Cardiac septum (tissue), 1 donor: ENCODE measurements at regions of chr1 and their contacts with region 1.

Region 1: DNA sequence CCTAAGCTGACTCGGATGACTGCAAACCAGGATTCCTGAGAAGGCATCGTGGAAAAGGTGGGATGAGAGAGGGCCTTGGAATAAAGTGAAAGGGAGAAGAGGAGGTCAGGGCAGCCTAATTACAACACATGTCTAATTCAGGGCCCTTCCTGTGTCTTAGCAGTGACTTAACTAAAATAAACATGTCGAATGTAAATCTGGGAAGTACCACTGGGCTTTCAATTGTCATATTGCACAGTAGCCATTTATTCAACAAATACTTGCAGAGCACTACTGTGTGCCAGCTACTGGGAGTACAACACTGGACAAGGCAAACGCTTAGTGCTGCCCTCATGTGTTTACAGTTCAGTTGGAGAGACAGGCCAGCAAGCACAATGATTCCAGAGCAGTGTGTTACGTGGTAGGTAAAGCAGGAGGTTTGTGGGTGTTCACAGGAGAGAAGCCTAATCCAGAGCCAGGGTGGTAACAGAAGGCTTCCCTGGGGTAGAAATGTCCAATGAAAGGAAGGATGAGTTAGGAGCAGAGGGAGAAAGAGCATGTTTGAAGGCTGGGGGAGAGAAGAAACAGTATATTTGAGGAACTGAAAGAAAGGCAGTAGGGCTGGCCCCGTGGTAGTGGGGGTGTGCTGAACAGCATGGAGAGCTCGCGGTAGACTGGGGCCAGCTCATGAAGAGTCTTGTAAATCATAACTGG is 38.0 kb upstream of the RASAL2 start:
- DNase-seq: no peak

Region 2: GRCh38 chr1:178037503-178038253 is 18.2 kb before region 1 on chr1:
- intact Hi-C with region 1: loop called (anchors 2 kb)
- DNase-seq: peak; percentile 94

Region 3: DNA sequence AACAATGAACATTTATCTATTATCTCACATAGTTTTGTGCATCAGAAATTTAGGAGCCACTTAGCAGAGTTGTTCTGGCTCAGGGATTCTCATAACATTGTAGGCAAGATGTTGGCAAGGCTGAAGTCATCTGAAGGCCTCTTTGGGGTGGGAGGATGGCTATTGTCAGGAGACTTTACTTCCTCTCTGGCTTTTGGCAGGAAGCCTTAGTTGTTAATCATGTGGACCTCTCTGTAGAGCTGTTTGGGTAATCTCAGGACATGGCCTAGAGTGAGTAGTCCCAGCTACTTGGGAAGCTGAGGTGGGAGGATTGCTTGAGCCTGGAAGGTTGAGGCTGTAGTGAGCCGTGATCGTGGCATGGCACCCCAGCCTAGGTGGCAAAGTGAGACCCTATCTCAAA is 78.1 kb after region 1 on chr1:
- intact Hi-C with region 1: loop called (anchors 10 kb)
- DNase-seq: no peak

Region 4: DNA sequence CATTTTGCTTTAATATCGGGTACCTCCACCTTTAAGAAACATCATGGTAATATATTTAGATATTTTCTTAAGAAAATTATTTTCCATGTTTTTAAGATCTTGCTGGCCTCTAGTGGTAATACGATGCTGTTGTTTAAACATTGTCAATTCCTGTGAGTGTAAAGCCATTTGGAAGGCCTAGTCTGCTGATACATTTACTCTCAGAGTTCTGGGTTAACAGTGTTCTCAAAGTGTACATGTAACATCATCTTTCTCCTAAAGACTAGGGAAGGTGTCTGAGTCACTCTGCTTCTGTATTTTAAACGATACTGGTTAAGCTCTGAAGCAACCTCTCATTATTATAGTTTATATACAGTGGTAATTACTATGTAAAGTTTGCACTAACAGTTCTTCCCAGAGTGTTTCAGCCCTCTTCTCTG is 227.0 kb after region 1 on chr1:
- intact Hi-C with region 1: loop called (anchors 5 kb)
- DNase-seq: no peak

Region 5: DNA sequence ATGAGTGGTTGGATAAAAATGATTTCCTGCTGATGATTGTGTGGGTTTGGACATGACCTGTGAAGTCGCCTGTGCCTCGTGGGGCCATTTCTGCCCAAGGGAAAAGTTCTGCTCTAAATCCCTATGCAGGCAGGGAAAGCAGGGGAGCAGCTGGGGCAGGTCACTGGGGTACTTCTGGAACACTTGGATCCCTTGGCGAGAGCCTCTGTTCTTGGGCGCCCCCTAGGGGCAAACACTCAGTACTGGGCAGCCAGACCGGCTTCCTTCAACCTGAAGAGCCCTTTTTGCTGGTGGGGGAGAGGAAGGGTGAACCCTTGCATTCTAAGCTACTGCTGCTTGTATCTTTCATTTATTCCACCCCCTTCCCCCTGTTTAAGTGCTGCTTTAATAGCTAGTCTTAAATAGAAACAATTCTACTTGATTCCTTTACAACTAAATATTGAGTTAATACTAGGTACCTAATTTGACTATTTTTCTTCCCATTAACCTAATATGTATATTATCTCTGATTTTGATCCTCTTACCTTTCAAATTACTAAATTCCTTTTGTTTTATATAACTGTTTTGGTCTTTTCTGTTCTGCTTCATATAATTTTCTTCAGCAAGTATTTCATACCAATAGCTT is 445.9 kb after region 1 on chr1:
- intact Hi-C with region 1: loop called (anchors 10 kb)
- DNase-seq: peak; percentile 86